Heart right ventricle (tissue), 16 donors: ENCODE measurements at regions of chr10 and their contacts with region 1.

Region 1: DNA sequence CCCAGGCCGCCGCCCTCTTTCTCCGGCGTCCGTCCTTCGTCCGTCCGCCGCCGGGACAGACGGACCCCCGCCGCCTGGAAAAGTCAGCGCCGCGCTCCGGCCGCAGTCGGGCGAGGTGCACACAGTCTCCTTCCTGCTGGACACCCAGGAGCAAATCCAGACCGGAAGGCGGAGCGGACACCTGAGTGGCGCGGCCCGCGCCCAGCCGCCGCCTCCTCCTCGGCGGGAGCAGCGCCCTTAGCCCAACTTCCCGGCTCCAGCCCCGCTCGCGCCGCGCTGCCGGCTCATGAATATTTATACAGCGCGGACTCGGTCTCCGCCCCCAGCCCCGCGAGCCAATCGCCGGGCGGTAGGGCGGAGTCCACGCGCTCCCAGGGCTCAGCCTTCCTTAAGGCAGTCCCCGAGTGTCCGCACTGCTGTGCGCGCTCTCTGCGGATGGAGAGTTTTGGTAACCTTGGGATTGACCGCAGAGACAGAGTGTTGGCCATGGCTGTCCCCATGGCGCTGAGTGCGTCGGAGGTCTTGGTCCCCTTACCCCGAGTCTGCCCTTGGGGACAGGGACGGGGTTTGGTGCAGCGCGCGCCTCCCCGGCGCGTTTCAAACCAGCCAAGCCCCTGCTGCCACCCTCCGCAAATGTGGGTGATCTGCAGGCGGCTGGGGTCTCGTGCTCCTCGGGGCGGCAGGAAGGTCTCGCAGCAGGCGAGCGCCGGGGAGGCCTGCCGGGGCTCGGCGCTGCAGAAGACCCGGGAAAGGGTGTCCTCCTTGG is at the start of gene FZD8:
- DNase-seq: peak; percentile 92 to 93
- ATAC-seq: peak; percentile 93 to 97 (median 96)
- H3K4me3 ChIP-seq: peak within 1 kb of the TSS; percentile 75 to 94 (median 84)
- H3K27ac ChIP-seq: peak within 1 kb of the TSS; percentile 84 to 99 (median 90)
- H3K4me1 ChIP-seq: peaks cover 8 to 55% (median 36%) of the 10 kb centered on the region in 9 donors
- H3K27me3 ChIP-seq: peaks cover 0 to 74% (median 0%) of the 10 kb centered on the region in 7 donors
- CTCF ChIP-seq: peak in 4 of 9 donors; percentile 6 to 29 (median 18)
- total RNA-seq, gene FZD8: 3.0 to 19.5 (median 6.4) TPM

Region 2: GRCh38 chr10:35690534-35690933 is 48.3 kb after region 1 on chr10:
- intact Hi-C with region 1: no loop called
- DNase-seq: no peak
- ATAC-seq: no peak
- H3K4me3 ChIP-seq: no peak overlapping the region
- H3K27ac ChIP-seq: no peak overlapping the region
- H3K4me1 ChIP-seq: no peaks in the 10 kb centered on the region
- H3K27me3 ChIP-seq: no peaks in the 10 kb centered on the region
- CTCF ChIP-seq: no peak

Region 3: DNA sequence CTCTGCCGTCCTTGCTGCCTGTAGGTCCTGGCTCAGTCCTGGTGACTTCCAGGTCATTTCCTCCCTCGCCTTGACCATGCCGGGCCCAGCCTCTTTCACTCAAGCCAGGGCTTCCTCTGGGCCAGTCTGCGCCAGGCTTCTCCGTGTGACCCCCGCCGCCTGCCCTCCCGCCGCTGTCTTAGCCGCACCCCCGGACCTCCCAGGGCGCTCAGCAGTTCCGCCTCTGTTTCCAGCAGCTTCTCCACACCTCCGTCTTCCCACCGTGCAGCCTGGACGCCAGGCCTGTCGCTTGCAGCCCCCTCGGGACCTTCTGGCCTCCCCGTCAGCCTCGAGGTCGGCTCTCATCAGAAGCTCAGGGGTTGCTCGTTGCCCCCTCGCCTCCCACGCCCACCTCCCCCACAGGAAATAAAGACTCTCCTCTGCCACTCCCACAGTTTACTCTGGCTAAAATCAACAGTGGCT is 122.9 kb after region 1 on chr10:
- intact Hi-C with region 1: loop called in 1 of 10 experiments (anchors 10 kb)
- DNase-seq: peak; percentile 11 to 18
- ATAC-seq: peak in 7 of 8 donors; percentile 29 to 71 (median 52)
- H3K4me3 ChIP-seq: peak overlapping the region in 2 of 10 donors; percentile 7 to 17
- H3K27ac ChIP-seq: no peak overlapping the region
- H3K4me1 ChIP-seq: peaks cover 0 to 3% (median 0%) of the 10 kb centered on the region in 9 donors
- H3K27me3 ChIP-seq: no peaks in the 10 kb centered on the region
- CTCF ChIP-seq: no peak

Region 4: GRCh38 chr10:35854661-35855060 is 212.5 kb after region 1 on chr10:
- intact Hi-C with region 1: loop called in 1 of 10 experiments (anchors 5 kb)
- DNase-seq: no peak
- ATAC-seq: no peak
- H3K4me3 ChIP-seq: no peak overlapping the region
- H3K27ac ChIP-seq: no peak overlapping the region
- H3K4me1 ChIP-seq: peaks cover 0 to 18% (median 0%) of the 10 kb centered on the region in 9 donors
- H3K27me3 ChIP-seq: no peaks in the 10 kb centered on the region
- CTCF ChIP-seq: no peak

Region 5: DNA sequence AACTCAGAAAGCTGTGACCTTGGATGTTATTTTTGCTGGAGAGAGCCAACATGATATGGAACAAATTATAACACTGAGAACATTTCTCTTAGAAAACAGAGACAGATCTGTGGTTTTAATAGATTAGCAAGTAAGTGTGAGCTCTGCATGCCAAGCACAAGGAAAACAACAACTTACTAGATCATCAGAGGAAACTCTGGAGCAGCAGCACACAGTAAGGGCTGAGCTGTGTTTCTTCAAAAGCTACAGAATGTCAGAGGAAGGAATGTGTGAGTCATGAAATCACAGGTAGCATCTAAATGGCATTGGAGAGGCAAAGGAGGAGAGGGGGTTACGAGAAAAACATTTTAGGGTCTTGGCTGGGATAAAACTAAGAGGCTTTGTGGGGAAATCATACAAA is 283.3 kb after region 1 on chr10:
- intact Hi-C with region 1: loop called in 1 of 10 experiments (anchors 10 kb)
- DNase-seq: no peak
- ATAC-seq: no peak
- H3K4me3 ChIP-seq: no peak overlapping the region
- H3K27ac ChIP-seq: no peak overlapping the region
- H3K4me1 ChIP-seq: peaks cover 0 to 16% (median 0%) of the 10 kb centered on the region in 9 donors
- H3K27me3 ChIP-seq: no peaks in the 10 kb centered on the region
- CTCF ChIP-seq: no peak

Region 6: GRCh38 chr10:36181401-36181800 is 539.2 kb after region 1 on chr10:
- intact Hi-C with region 1: loop called in 2 of 10 experiments (anchors 10 kb)
- DNase-seq: no peak
- ATAC-seq: peak in 7 of 8 donors; percentile 68 to 90 (median 82)
- H3K4me3 ChIP-seq: no peak overlapping the region
- H3K27ac ChIP-seq: peak overlapping the region in 4 of 10 donors; percentile 13 to 79 (median 69)
- H3K4me1 ChIP-seq: peaks cover 0 to 25% (median 16%) of the 10 kb centered on the region in 9 donors
- H3K27me3 ChIP-seq: no peaks in the 10 kb centered on the region
- CTCF ChIP-seq: no peak

Region 7: DNA sequence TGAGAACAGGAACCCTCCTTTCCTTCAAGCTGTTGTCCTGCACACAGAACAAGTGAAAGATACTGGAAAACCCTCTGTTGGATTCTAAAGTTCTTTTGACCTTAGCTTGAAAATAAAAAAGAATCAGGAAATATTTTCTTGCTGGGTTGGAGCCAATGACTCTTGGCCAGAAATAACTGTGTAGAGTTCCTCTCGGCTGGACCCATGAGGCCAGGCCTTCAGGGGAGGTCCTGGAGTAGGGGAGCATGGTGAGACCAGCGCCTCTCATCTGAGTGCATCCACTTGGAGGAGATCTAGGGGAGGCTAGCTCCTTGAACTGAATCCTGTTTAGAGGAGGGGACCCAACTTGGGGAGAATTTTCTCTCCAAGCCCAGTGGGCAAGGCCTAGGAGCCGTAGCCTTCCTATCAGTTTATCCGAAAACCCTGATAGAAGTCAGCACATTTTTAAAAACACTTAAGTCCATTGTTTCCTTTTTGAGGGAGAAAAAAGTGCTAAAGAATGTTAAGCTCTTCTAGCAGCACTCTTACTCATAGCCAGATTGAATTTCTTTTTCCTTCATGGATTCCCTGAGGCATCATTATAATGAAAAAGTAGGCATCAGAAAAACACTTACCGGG is 847.5 kb after region 1 on chr10:
- intact Hi-C with region 1: loop called in 1 of 10 experiments (anchors 10 kb)
- DNase-seq: peak; percentile 25 to 46
- ATAC-seq: peak; percentile 72 to 91 (median 83)
- H3K4me3 ChIP-seq: no peak overlapping the region
- H3K27ac ChIP-seq: peak overlapping the region in 9 of 10 donors; percentile 21 to 86 (median 54)
- H3K4me1 ChIP-seq: peaks cover 0 to 45% (median 25%) of the 10 kb centered on the region in 9 donors
- H3K27me3 ChIP-seq: no peaks in the 10 kb centered on the region
- CTCF ChIP-seq: no peak